PC-3 (cell line): ENCODE measurements at regions of chr1 and their contacts with region 1.

Region 1: GRCh38 chr1:202861420-202862200 is 27.3 kb downstream of the RABIF start:
- DNase-seq: peak; percentile 97
- ATAC-seq: peak; percentile 96
- H3K4me3 ChIP-seq: peak overlapping the region; percentile 88
- H3K27ac ChIP-seq: no peak overlapping the region
- H3K4me1 ChIP-seq: peaks cover 14% of the 10 kb centered on the region; the same call in 1 of the 2 replicates
- H3K27me3 ChIP-seq: no peaks in the 10 kb centered on the region
- CTCF ChIP-seq: no peak

Region 2: DNA sequence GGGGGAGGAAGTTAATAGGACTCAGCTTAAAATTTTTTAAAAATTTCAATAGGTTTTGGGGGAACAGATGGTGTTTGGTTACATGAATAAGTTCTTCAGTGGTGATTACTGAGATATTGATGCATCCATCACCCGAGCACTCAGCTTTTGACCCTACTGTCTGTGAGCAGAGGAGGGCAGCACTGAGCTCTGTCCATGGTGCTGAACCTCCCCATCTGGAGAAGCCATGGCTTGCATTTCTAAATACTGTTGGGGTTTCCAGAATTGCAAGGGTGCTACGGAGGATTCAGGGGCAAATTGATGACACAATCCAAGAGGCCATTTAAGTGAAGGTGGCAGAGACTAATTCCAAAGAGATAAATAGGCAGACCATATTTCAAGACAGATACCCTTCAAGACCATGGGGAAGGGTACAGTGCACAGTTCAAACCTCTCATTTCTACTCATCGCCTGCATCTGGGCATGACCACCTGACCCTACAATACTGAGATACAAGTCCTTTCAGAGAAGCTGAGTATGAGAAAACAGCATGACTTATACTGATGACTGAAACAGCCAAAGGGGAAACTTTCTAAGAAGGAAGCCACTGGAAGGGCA is 168.6 kb before region 1 on chr1:
- CTCF ChIA-PET with region 1: no interaction called
- POLR2A ChIA-PET with region 1: no interaction called
- intact Hi-C with region 1: no loop called
- DNase-seq: peak; percentile 61
- ATAC-seq: peak; percentile 68
- H3K4me3 ChIP-seq: no peak overlapping the region
- H3K27ac ChIP-seq: no peak overlapping the region
- H3K4me1 ChIP-seq: no peaks in the 10 kb centered on the region
- H3K27me3 ChIP-seq: peaks cover 23% of the 10 kb centered on the region; the same call in 1 of the 2 replicates
- CTCF ChIP-seq: no peak

Region 3: GRCh38 chr1:202888531-202889360 is 27.1 kb after region 1 on chr1 and contains the start of gene RABIF:
- CTCF ChIA-PET with region 1: no interaction called
- POLR2A ChIA-PET with region 1: interaction called, 4 read pairs
- intact Hi-C with region 1: loop called (anchors 1 kb)
- DNase-seq: peak; percentile 98
- ATAC-seq: peak; percentile 94
- H3K4me3 ChIP-seq: peak within 1 kb of the TSS; percentile 92
- H3K27ac ChIP-seq: peak within 1 kb of the TSS; percentile 78
- H3K4me1 ChIP-seq: peaks cover 13% of the 10 kb centered on the region
- H3K27me3 ChIP-seq: no peaks in the 10 kb centered on the region
- CTCF ChIP-seq: no peak; the same call in 1 of the 2 replicates
- total RNA-seq, gene RABIF: 14.8 and 15.5 TPM in 2 replicates